CD8-positive, alpha-beta T cell (primary cell): ENCODE measurements at regions of chr11 and their contacts with region 1.

Region 1: GRCh38 chr11:45804761-45805304 is at the start of gene SLC35C1:
- DNase-seq: peak; percentile 89 to 98 (median 97)
- ATAC-seq: peak; percentile 96
- H3K4me3 ChIP-seq: peak within 1 kb of the TSS; percentile 97
- H3K4me3 Mint-ChIP-seq: peak within 1 kb of the TSS; percentile 90
- H3K27ac ChIP-seq: peak within 1 kb of the TSS; percentile 76 to 81
- H3K27ac Mint-ChIP-seq: peak within 1 kb of the TSS; percentile 81
- H3K4me1 ChIP-seq: peaks cover 32% of the 10 kb centered on the region
- H3K4me1 Mint-ChIP-seq: peaks cover 44% of the 10 kb centered on the region
- H3K27me3 ChIP-seq: no peaks in the 10 kb centered on the region
- H3K27me3 Mint-ChIP-seq: no peaks in the 10 kb centered on the region
- CTCF ChIP-seq: no peak
- total RNA-seq, gene SLC35C1: 3.1 to 3.3 TPM

Region 2: GRCh38 chr11:45872513-45873356 is 67.9 kb after region 1 on chr11:
- CTCF ChIA-PET with region 1: no interaction called
- POLR2A ChIA-PET with region 1: no interaction called
- intact Hi-C with region 1: no loop called
- DNase-seq: peak in 6 of 9 experiments; percentile 16 to 55 (median 45)
- ATAC-seq: peak; percentile 83
- H3K4me3 ChIP-seq: no peak overlapping the region
- H3K4me3 Mint-ChIP-seq: no peak overlapping the region
- H3K27ac ChIP-seq: no peak overlapping the region
- H3K27ac Mint-ChIP-seq: no peak overlapping the region
- H3K4me1 ChIP-seq: no peaks in the 10 kb centered on the region
- H3K4me1 Mint-ChIP-seq: no peaks in the 10 kb centered on the region
- H3K27me3 ChIP-seq: no peaks in the 10 kb centered on the region
- H3K27me3 Mint-ChIP-seq: no peaks in the 10 kb centered on the region
- CTCF ChIP-seq: peak; percentile 32

Region 3: GRCh38 chr11:45899448-45900173 is 94.8 kb after region 1 on chr11:
- CTCF ChIA-PET with region 1: no interaction called
- POLR2A ChIA-PET with region 1: no interaction called
- intact Hi-C with region 1: loop called in 1 of 2 experiments (anchors 5 kb)
- DNase-seq: peak; percentile 31 to 88 (median 63)
- ATAC-seq: peak; percentile 79
- H3K4me3 ChIP-seq: peak overlapping the region; percentile 27 to 53
- H3K4me3 Mint-ChIP-seq: peak overlapping the region; percentile 69
- H3K27ac ChIP-seq: peak overlapping the region in 1 of 2 experiments; percentile 30
- H3K27ac Mint-ChIP-seq: no peak overlapping the region
- H3K4me1 ChIP-seq: peaks cover 9% of the 10 kb centered on the region
- H3K4me1 Mint-ChIP-seq: peaks cover 8% of the 10 kb centered on the region
- H3K27me3 ChIP-seq: peaks cover 6 to 22% of the 10 kb centered on the region in 2 experiments
- H3K27me3 Mint-ChIP-seq: peaks cover 11% of the 10 kb centered on the region
- CTCF ChIP-seq: no peak